GM12878 (cell line): ENCODE measurements at regions of chr6 and their contacts with region 1.

Region 1: GRCh38 chr6:29834564-29835436 is 7.2 kb downstream of the HLA-G start:
- DNase-seq: no peak
- ATAC-seq: peak; percentile 79
- H3K4me3 ChIP-seq: no peak overlapping the region
- H3K27ac ChIP-seq: no peak overlapping the region
- H3K4me1 ChIP-seq: no peaks in the 10 kb centered on the region
- H3K27me3 ChIP-seq: peaks cover 0 to 5% of the 10 kb centered on the region in 2 experiments; a peak in 2 of 4 replicates
- CTCF ChIP-seq: peak; percentile 65 to 78 (median 70)
- EP300 ChIP-seq: no peak
- POLR2A ChIP-seq: no peak
- RAD21 ChIP-seq: peak; percentile 78

Region 2: DNA sequence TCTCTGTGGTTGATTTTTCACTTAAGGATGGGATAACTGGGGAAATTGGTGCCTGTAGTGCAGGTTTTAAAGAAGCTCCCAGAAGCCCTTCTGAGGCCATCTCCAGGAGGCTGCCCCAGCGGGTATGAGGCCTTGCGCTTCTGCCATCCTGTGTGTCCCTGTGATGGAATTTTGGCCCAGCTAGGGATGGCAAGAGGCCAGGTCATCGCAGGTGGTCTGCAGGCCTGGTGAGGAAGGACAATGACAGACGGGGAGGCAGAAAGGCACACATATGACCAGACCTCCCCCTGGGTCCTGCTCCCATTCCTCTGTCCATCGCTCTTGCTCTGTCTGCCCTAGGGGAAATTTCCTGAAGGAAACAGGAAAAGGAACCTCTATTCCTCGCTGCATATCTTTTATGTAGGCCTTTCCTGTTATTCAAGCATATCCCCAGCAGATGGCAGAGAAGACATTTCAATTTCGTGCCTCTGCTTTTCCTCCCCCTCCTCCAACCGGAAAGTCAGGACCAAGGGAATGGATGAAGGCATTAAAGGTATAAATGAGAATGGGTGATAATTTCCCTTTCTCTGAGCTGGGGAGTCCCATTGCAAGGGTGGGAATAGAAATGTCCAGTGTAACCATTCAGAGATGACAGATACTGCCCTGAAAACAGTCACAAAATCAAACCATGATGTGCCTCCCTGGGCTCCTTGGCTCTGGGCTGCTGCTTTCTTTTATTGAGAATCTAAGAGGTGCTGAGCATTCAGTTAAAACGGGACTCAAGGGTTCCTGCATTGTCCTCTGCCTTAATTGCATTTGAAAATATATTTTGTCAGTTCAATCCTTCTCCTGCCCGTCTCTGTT is 129.2 kb before region 1 on chr6:
- CTCF ChIA-PET with region 1: interaction called, 10 read pairs
- POLR2A ChIA-PET with region 1: no interaction called
- RAD21 ChIA-PET with region 1: no interaction called
- SMC1A ChIA-PET with region 1: interaction called, 8 read pairs
- in situ Hi-C with region 1: no loop called
- intact Hi-C with region 1: loop called (anchors 1 kb)
- DNase-seq: no peak
- ATAC-seq: no peak
- H3K4me3 ChIP-seq: no peak overlapping the region
- H3K27ac ChIP-seq: no peak overlapping the region
- H3K4me1 ChIP-seq: peaks cover 11% of the 10 kb centered on the region; the same call in 1 of the 2 replicates
- H3K27me3 ChIP-seq: no peaks in the 10 kb centered on the region
- CTCF ChIP-seq: peak; percentile 34 to 54 (median 46); a peak in 5 of 6 replicates
- EP300 ChIP-seq: no peak
- POLR2A ChIP-seq: no peak
- RAD21 ChIP-seq: peak; percentile 60

Region 3: GRCh38 chr6:29743568-29743967 is 91.2 kb before region 1 on chr6:
- CTCF ChIA-PET with region 1: interaction called, 57 read pairs
- POLR2A ChIA-PET with region 1: interaction called, 3 read pairs
- RAD21 ChIA-PET with region 1: interaction called, 15 read pairs
- SMC1A ChIA-PET with region 1: interaction called, 23 read pairs
- in situ Hi-C with region 1: loop called (anchors 5 kb)
- intact Hi-C with region 1: loop called (anchors 1 kb)
- DNase-seq: no peak
- ATAC-seq: no peak
- H3K4me3 ChIP-seq: no peak overlapping the region
- H3K27ac ChIP-seq: no peak overlapping the region
- H3K4me1 ChIP-seq: no peaks in the 10 kb centered on the region
- H3K27me3 ChIP-seq: no peaks in the 10 kb centered on the region
- CTCF ChIP-seq: no peak
- EP300 ChIP-seq: no peak
- POLR2A ChIP-seq: no peak
- RAD21 ChIP-seq: no peak

Region 4: DNA sequence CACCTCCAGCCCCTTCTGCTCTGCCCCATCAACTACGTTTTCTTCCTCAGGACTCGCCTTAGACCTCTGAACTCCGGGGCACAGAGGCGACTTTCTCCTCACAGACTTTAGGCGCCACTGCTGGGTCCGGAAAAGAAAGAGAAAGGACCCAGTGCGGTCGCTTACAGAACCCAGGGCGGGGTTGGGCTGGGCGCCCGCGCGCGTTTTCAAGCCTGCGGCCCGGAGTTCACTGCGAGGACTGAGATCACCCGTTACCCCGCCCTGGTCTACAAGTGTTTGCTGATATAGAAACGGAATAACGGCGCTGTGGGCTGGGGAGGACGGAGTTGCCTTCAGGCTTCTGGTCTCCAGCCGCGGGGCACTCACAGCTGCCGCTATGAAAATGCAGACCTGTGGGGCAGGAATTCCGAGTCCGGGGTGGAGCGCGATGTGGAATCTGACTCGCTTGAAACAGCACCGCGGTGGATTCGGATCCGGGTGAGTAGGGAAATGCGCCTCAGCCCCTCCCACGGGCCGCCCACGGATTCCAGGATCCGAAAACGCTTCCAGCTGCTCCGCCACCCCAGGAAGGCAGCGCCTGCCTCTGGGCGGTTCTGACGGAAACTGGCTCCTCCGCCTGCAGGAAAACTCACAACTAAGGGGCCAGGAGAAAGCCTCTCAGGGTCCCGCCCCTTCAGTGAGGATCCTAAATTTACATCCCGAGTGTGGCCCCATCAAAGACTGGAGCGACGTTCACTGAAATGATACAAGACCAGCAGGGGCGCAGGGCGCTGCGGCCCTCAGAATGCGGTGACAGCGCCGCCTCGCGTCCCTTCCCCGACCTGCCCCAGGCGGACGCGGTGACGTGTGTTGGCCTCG is 82.1 kb before region 1 on chr6:
- CTCF ChIA-PET with region 1: interaction called, 12 read pairs
- POLR2A ChIA-PET with region 1: no interaction called
- RAD21 ChIA-PET with region 1: interaction called, 7 read pairs
- SMC1A ChIA-PET with region 1: interaction called, 6 read pairs
- in situ Hi-C with region 1: no loop called
- intact Hi-C with region 1: no loop called
- DNase-seq: peak; percentile 54
- ATAC-seq: peak; percentile 85
- H3K4me3 ChIP-seq: peak overlapping the region; percentile 66
- H3K27ac ChIP-seq: peak overlapping the region; percentile 84
- H3K4me1 ChIP-seq: peaks cover 10% of the 10 kb centered on the region
- H3K27me3 ChIP-seq: no peaks in the 10 kb centered on the region
- CTCF ChIP-seq: peak; percentile 99 to 100 (median 100); a peak in 5 of 6 replicates
- EP300 ChIP-seq: no peak
- POLR2A ChIP-seq: peak; percentile 58; the same call in 1 of the 2 replicates
- RAD21 ChIP-seq: peak; percentile 83

Region 5: DNA sequence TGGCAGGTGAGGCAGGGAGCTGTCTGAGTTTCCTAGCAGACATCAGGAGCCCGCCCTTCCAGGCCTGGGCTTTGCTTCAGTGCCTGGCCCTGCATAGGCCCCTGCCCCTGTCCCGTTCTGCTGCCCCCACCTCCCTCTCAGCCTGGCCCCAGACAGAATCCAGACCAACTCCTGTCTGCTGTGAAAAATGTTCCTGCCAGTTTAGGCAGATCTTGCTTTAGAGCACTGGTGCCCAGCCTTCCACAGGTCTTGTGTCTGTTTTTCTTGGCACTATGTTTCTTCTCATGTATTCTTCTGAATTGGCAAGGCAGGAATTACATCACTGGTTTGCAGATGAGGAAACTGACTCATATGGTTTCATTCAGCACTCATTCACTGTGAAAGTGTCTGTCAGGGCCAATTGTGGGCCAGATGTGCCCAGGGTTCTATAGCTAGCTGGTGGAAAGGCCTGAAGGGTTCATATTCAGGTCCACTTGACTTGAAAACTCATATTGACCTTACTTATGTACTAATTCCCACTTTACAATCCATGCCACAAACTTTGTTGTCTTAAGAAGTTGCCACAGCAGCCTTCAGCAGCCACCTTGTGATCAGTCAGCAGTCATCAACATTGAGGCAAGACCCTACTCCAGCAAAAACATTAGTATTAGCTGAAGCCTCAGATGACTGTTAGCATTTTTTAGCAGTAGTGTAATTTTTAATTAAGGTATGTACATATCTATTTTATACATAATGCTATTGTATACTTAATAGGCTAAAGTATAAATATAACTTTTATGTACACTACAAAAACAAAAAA is 71.1 kb before region 1 on chr6:
- CTCF ChIA-PET with region 1: interaction called, 12 read pairs
- POLR2A ChIA-PET with region 1: no interaction called
- RAD21 ChIA-PET with region 1: interaction called, 4 read pairs
- SMC1A ChIA-PET with region 1: no interaction called
- in situ Hi-C with region 1: no loop called
- intact Hi-C with region 1: no loop called
- DNase-seq: no peak
- ATAC-seq: peak; percentile 86
- H3K4me3 ChIP-seq: no peak overlapping the region
- H3K27ac ChIP-seq: no peak overlapping the region
- H3K4me1 ChIP-seq: peaks cover 8% of the 10 kb centered on the region
- H3K27me3 ChIP-seq: no peaks in the 10 kb centered on the region
- CTCF ChIP-seq: no peak
- EP300 ChIP-seq: no peak
- POLR2A ChIP-seq: no peak
- RAD21 ChIP-seq: no peak